Activated T-helper 2 cell treated with anti-CD3 and anti-CD28 coated beads, Interferon-gamma antibody, Interleukin-2, Interleukin-4, amounts not matched to agents 10 μg/mL and 5 μg/mL and 100 μg/mL, durations not matched to agents 14 hours and 24 hours and 36 hours (primary cell): ENCODE measurements at regions of chr17 and their contacts with region 1.

Region 1: GRCh38 chr17:2259769-2260536 is 43.6 kb downstream of the SMG6 start:
- DNase-seq: peak; percentile 75
- H3K4me3 Mint-ChIP-seq: peak overlapping the region; percentile 62
- H3K27ac Mint-ChIP-seq: peak overlapping the region; percentile 97
- H3K4me1 Mint-ChIP-seq: peaks cover 68% of the 10 kb centered on the region
- H3K27me3 Mint-ChIP-seq: no peaks in the 10 kb centered on the region

Region 2: GRCh38 chr17:1878419-1879121 is 381.4 kb before region 1 on chr17:
- intact Hi-C with region 1: loop called (anchors 10 kb)
- DNase-seq: no peak
- H3K4me3 Mint-ChIP-seq: no peak overlapping the region
- H3K27ac Mint-ChIP-seq: no peak overlapping the region
- H3K4me1 Mint-ChIP-seq: peaks cover 25% of the 10 kb centered on the region
- H3K27me3 Mint-ChIP-seq: no peaks in the 10 kb centered on the region

Region 3: GRCh38 chr17:2064980-2065785 is 194.8 kb before region 1 on chr17:
- intact Hi-C with region 1: loop called (anchors 5 kb)
- DNase-seq: peak; percentile 70
- H3K4me3 Mint-ChIP-seq: no peak overlapping the region
- H3K27ac Mint-ChIP-seq: peak overlapping the region; percentile 73
- H3K4me1 Mint-ChIP-seq: peaks cover 64% of the 10 kb centered on the region
- H3K27me3 Mint-ChIP-seq: no peaks in the 10 kb centered on the region

Region 4: GRCh38 chr17:2292100-2292499 is 32.1 kb after region 1 on chr17:
- intact Hi-C with region 1: no loop called
- DNase-seq: no peak
- H3K4me3 Mint-ChIP-seq: no peak overlapping the region
- H3K27ac Mint-ChIP-seq: no peak overlapping the region
- H3K4me1 Mint-ChIP-seq: peaks cover 22% of the 10 kb centered on the region
- H3K27me3 Mint-ChIP-seq: no peaks in the 10 kb centered on the region

Region 5: DNA sequence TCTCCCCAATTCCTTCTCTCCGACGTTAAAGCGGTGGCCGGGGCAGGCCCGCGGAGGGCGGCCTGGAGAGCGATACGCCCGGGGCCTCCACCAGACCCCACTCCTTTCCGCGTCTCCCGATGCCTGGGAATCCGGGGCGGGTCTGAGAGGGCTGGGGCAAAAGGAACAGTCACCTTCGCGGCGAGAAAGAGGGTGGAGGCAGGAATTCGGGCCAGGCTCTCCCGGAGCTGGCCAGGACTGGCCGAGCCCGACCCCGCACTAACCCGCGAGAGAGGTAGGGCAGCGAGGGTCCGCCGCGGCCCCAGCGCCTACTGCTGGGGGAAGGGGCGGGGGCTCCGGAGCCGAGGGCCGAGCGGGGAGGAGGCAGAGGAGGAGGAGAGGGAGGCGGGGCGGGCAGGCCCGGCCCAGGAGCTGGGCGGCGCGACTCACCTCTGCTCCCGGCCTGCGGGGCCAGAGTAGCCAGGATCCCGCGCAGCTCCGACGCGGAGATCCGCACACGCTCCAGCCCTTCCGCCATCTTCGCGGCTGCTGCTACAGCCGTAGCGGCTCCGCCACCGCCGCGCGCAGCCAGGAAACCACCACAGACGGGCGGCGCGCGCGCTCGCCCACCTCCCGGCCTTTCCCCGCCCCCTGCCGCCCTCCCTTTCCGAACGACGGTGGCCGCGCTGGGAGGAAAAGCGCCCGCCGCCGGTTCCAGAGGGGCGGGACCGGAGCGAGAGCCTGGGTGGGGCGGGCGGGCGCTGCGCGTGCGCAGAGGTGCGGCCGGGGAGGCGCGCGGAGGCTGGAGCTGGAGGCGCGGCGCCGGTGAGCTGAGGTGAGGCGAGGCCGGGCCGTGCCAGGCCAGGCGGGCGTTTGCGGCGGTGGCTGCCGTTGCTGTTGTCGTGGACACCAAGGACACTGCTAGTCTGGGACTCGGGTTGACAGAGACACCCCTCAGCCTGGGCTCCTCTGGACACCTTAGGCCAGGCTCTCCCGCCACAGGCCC is 43.5 kb after region 1 on chr17 and contains the starts of genes SMG6 and SRR:
- intact Hi-C with region 1: loop called (anchors 5 kb)
- DNase-seq: peak; percentile 90
- H3K4me3 Mint-ChIP-seq: peak within 1 kb of the TSS; percentile 87
- H3K27ac Mint-ChIP-seq: peak within 1 kb of the TSS; percentile 70
- H3K4me1 Mint-ChIP-seq: peaks cover 25% of the 10 kb centered on the region
- H3K27me3 Mint-ChIP-seq: no peaks in the 10 kb centered on the region
- total RNA-seq, gene SMG6: 33.5 and 43.0 TPM in 2 replicates
- total RNA-seq, gene SRR: 17.3 and 18.4 TPM in 2 replicates